Panc1 (cell line): ENCODE measurements at regions of chr14 and their contacts with region 1.

Region 1: DNA sequence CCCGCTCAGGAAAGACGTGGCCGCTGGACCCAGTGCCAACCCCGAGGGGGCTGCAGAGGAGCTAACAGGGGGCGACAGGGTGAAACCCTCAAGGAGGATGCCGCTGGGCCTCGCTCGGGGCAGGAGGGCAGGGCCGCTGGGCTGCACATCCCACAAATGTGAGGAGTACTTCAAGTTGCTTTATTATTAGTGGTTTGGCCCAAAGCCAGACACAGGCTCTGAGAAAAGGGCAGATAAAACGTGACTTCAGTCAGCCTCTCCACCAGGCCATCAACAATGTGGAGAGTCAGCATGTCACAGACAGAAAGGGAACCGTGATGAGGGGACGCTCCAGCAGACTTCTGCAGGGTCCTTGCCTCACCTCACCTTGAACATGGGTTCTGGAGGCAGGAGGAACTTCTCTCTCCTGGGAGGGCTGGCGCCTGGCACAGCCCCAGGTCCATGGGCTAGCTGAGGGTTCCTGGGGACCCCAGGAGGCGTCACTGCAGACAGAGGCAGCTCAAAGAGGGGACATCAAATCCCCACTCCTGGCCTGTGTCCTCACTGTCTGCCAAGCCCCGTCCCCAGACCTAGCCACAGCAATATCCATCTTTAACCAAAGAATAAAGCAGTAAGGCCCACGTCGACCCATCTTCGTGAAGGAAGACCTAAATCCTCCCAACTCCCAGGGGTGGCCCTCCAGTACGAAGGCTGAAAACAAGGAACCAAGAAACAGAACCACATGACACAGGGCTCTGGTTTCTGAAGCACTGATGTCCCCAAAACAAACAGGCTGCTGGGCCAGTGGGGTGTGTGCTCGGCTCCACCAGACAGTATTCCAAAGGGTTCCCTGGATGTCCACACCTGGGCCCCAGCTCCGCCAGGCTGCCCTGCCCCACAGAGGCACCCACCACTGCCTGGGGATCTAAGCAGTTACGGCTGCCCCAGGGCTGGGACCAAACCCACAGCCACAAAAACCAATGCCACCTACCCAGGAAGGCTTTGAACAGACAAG is 35.1 kb downstream of the CCDC85C start:
- DNase-seq: no peak
- ATAC-seq: no peak
- H3K4me3 ChIP-seq: no peak overlapping the region
- H3K27ac ChIP-seq: peak overlapping the region; percentile 77
- H3K4me1 ChIP-seq: peaks cover 96% of the 10 kb centered on the region
- H3K27me3 ChIP-seq: no peaks in the 10 kb centered on the region
- CTCF ChIP-seq: no peak

Region 2: DNA sequence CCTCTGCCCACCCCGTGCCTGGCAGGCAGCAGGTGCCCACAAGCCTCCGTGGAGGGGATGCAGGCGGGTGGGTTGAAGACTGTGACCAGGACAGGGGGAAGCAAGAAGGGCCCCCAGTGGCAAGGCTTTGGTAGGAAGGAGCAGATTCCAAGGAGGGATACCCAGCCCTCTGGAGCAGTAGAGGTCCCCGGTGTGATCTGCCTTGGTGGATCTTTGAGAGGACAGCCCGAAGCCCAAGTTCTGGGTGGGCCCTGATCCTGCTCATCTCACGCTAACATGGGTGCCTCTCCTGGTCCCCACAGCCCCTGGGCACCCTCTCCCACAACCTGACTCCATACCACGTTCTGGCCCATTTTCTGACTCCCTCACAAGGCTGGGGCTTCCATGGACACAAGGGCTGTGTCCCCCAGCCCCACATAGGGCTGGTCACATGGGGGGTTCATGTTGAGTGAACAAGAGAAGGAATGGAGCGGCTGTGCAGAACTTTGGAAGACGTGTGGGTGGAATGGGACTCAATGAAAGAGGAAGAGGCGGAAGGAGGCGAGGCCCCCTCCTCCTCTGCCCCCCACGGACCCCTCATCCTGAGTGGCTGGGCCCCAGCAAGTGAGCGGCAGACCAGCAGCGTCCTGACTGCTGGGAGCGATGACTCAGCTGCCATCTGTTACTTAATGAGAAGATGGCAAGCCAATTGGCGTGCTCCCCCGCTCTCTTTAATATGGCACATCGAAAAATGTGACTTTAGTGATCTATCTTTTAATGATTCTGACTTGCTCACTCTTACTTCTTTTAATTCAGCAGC is 219.8 kb before region 1 on chr14:
- CTCF ChIA-PET with region 1: no interaction called
- POLR2A ChIA-PET with region 1: no interaction called
- in situ Hi-C with region 1: no loop called
- intact Hi-C with region 1: no loop called
- DNase-seq: no peak
- ATAC-seq: no peak
- H3K4me3 ChIP-seq: no peak overlapping the region
- H3K27ac ChIP-seq: no peak overlapping the region
- H3K4me1 ChIP-seq: no peaks in the 10 kb centered on the region
- H3K27me3 ChIP-seq: no peaks in the 10 kb centered on the region
- CTCF ChIP-seq: no peak

Region 3: DNA sequence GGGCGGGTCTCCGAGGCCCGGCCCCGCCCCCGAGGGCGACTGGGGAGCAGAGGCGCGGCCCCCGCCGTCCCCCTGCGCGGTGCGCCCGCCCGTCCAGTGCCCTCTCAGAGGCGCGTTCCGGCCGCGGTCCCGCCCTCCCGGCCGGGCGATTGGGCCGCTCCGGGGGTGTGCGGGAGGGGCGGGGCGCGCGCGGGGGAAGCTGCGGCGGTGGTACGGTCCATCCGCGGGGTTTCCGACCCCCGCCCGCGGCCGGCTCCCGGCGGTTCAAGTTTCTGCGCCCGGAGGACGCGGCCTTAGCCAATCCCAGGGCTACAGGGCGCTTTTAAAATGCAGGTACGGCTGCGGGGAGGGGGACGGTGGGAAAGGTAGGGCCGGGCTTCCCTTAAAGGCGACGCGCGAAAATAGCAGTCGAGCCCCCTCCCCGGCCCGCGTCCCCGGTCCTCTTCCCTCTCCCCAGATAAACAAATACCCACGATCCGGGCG is 35.5 kb after region 1 on chr14:
- CTCF ChIA-PET with region 1: interaction called, 8 read pairs
- POLR2A ChIA-PET with region 1: no interaction called
- in situ Hi-C with region 1: no loop called
- intact Hi-C with region 1: loop called (anchors 5 kb)
- DNase-seq: no peak
- ATAC-seq: peak; percentile 91
- H3K4me3 ChIP-seq: peak overlapping the region; percentile 73 to 74
- H3K27ac ChIP-seq: peak overlapping the region; percentile 80
- H3K4me1 ChIP-seq: peaks cover 25% of the 10 kb centered on the region
- H3K27me3 ChIP-seq: no peaks in the 10 kb centered on the region
- CTCF ChIP-seq: no peak